ENCODE measurements at regions of chr6 and their contacts with region 1.

Region 1: DNA sequence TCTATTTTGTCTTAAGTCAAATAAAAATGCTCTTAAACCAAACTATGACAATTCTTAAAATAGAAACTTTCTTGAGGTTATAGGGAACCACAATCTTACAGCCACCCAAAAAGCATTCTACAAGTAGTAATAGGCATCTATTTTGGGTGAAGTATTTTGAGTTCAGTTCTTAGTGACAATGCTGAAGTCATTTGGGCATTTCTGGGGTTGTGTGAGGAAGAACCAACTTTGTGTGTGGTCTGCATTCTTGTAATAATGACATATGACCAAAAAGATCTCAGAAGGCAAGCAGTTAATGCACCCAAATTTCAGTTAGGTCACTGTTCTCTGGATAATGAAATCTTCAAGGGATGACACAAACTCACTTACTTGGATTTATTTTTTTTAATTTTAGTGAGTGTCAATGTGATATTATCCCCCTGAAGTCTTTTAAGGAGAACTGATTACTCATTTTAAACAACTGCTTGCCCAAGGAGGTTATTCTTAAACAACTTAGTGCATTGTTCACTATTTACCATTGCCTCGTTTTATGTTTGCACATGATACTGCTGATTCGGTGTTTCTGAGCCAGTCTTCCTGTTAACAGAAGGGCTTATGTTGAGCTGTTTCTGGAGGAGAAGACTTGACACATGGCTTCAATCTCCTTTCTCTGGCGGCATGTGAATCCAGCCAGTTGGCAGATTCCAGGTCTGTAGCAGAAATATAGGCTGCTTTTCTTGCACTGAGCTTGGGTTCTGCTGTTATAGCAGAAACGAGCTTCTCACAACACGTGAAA is 618.9 kb downstream of the BCKDHB start:
- DNase-seq: no peak
- ATAC-seq: no peak
- H3K4me3 ChIP-seq: no peak overlapping the region
- H3K27ac ChIP-seq: no peak overlapping the region
- H3K4me1 ChIP-seq: no peaks in the 10 kb centered on the region
- H3K27me3 ChIP-seq: no peaks in the 10 kb centered on the region
- CTCF ChIP-seq: no peak
- POLR2A ChIP-seq: no peak

Region 2: DNA sequence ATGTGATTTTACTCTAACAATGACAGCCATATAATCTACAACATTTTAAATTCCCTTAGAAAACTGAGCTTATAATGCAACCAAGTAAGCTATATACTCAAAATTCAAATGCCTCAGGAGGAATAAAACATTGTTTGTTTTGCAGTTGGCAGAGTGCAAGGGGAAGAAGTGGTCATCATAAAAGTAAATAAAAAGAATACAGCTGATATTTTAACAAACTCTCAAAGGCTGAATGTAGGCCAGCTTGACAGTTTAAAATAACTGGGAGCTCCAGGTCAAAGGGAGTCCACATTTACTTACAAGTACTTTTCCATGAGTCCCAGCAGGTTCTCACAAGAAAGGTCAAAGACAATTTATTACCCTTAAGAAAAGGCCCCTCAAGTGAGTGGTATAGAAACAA is 29.1 kb before region 1 on chr6:
- intact Hi-C with region 1: no loop called
- DNase-seq: no peak
- ATAC-seq: no peak
- H3K4me3 ChIP-seq: no peak overlapping the region
- H3K27ac ChIP-seq: no peak overlapping the region
- H3K4me1 ChIP-seq: no peaks in the 10 kb centered on the region
- H3K27me3 ChIP-seq: no peaks in the 10 kb centered on the region
- CTCF ChIP-seq: no peak
- POLR2A ChIP-seq: no peak

Region 3: DNA sequence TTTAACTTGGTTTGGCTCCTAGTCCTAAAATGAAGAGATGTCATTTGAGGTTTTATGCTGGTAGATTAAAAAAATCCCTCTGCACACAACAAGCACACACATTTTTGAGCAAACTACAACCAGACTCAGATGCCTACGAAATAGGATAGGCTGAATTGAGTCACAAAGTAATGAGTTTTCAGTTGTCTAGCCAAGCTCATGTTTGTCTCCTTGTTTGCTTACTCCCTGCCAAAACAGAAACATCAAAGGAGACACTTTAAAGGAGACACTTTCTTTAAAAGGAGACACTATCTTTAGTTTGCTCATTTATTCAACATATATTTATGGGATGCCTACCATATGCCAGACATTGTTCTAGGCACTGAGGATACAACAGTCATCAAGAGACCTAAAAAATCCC is 1694.5 kb after region 1 on chr6:
- intact Hi-C with region 1: loop called in 1 of 10 experiments (anchors 10 kb)
- DNase-seq: no peak
- ATAC-seq: no peak
- H3K4me3 ChIP-seq: no peak overlapping the region
- H3K27ac ChIP-seq: no peak overlapping the region
- H3K4me1 ChIP-seq: no peaks in the 10 kb centered on the region
- H3K27me3 ChIP-seq: no peaks in the 10 kb centered on the region
- CTCF ChIP-seq: no peak
- POLR2A ChIP-seq: no peak